ENCODE measurements at regions of chr7 and their contacts with region 1.

Region 1: GRCh38 chr7:5665094-5666025 is 116.1 kb downstream of the RNF216 start:
- DNase-seq: peak; percentile 81
- ATAC-seq: peak; percentile 69
- H3K4me3 Mint-ChIP-seq: no peak overlapping the region
- H3K27ac Mint-ChIP-seq: no peak overlapping the region
- H3K4me1 Mint-ChIP-seq: peaks cover 22% of the 10 kb centered on the region
- H3K27me3 Mint-ChIP-seq: no peaks in the 10 kb centered on the region

Region 2: DNA sequence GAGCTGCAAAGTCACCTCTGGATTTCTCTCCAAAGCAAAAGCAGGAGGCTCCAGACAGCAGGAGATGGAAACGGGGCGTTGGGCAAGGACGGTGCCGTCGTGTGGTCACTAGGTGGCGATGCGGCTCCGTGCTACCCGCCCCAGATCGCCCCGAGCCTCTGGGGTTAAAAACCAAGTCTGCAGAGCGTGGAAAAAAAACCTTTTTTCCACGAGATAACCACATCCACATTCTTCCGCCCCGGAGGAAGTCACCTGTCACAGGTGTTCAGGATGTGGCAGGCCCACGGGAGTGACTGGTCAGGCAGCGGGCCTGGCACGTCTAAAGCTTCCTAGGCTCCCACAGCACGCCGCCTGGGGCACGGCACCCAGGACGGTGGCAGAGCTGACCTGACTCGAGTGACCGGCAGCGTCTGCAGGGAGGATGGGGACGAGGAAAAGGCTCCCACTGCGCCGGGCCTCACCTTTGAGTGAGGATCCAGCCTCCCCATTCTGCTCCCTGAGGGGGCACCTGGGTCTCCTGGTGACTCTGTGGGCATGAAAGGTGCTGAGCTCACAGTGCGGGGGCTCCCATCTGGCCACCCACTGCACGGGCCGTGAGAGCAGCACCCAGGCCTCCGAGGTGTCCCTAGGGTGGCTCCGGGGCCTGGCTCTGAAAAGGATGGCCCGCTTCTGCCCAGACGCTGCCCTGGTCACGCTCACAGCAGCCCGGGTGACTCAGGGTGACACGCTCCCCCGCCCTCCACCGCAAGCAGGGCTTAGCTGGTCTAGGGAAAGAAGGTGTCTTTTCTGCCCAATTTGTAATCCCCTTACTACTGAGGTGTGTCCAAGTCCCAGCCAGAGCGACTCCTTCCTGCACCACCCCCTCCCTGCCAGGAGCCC is 170.4 kb before region 1 on chr7:
- CTCF ChIA-PET with region 1: interaction called, 46 read pairs
- POLR2A ChIA-PET with region 1: no interaction called
- DNase-seq: peak; percentile 85
- ATAC-seq: peak; percentile 91
- H3K4me3 Mint-ChIP-seq: no peak overlapping the region
- H3K27ac Mint-ChIP-seq: peak overlapping the region; percentile 46
- H3K4me1 Mint-ChIP-seq: peaks cover 44% of the 10 kb centered on the region
- H3K27me3 Mint-ChIP-seq: no peaks in the 10 kb centered on the region

Region 3: GRCh38 chr7:5636914-5637313 is 28.4 kb before region 1 on chr7:
- CTCF ChIA-PET with region 1: interaction called, 13 read pairs
- POLR2A ChIA-PET with region 1: no interaction called
- DNase-seq: no peak
- ATAC-seq: no peak
- H3K4me3 Mint-ChIP-seq: no peak overlapping the region
- H3K27ac Mint-ChIP-seq: no peak overlapping the region
- H3K4me1 Mint-ChIP-seq: peaks cover 15% of the 10 kb centered on the region
- H3K27me3 Mint-ChIP-seq: no peaks in the 10 kb centered on the region

Region 4: GRCh38 chr7:5677538-5678294 is 12.4 kb after region 1 on chr7:
- CTCF ChIA-PET with region 1: interaction called, 57 read pairs
- POLR2A ChIA-PET with region 1: interaction called, 6 read pairs
- DNase-seq: peak; percentile 64
- ATAC-seq: peak; percentile 48
- H3K4me3 Mint-ChIP-seq: no peak overlapping the region
- H3K27ac Mint-ChIP-seq: no peak overlapping the region
- H3K4me1 Mint-ChIP-seq: peaks cover 51% of the 10 kb centered on the region
- H3K27me3 Mint-ChIP-seq: no peaks in the 10 kb centered on the region

Region 5: GRCh38 chr7:5704534-5704922 is 39.2 kb after region 1 on chr7:
- CTCF ChIA-PET with region 1: interaction called, 102 read pairs
- POLR2A ChIA-PET with region 1: no interaction called
- DNase-seq: peak; percentile 80
- ATAC-seq: no peak
- H3K4me3 Mint-ChIP-seq: no peak overlapping the region
- H3K27ac Mint-ChIP-seq: no peak overlapping the region
- H3K4me1 Mint-ChIP-seq: peaks cover 35% of the 10 kb centered on the region
- H3K27me3 Mint-ChIP-seq: no peaks in the 10 kb centered on the region

Measured in activated CD8-positive, alpha-beta T cell treated with anti-CD3 and anti-CD28 coated beads, Interleukin-2, amount 10 ng/mL, durations not matched to agents 7 days and 5 days (primary cell).